ENCODE measurements at regions of chr17 and their contacts with region 1.

Region 1: DNA sequence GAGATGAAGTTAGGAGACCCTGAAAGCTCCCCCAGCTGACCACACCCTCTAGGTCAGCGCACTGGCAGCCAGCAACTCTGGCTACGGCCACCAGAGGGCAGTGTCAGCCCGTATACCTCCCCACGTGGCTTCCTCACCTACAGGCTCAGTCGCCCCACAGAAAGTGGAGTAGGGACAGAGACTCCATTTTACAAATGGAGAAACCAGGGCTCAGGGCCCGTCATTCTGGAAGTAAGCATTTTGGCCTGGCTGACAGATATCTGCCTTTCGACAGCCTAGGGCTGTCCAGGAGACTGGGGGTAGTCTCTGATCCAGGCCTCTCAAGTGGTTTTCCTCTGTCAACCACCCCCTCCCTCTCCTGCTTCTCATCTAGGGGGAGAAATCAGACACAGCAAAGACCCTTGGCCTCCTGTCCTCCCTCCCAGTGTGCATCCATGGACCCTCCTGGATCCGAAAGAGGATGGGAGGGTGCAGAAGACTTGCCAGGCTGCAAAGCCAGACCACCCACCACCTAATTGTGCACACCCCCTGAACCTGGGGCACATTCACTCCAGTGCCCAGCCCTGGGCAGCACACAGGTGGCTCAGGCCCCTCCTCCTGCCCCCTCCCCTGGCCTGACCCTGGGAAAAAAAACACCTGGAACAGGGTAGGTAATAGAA is 3.8 kb upstream of the HAP1 start:
- DNase-seq: peak; percentile 75 to 82 (median 80)
- ATAC-seq: peak; percentile 92 to 96 (median 94)
- H3K4me3 ChIP-seq: no peak overlapping the region
- H3K27ac ChIP-seq: no peak overlapping the region
- H3K4me1 ChIP-seq: peaks cover 0 to 13% (median 3%) of the 10 kb centered on the region in 4 donors
- H3K27me3 ChIP-seq: peaks cover 5 to 12% of the 10 kb centered on the region in 2 donors
- CTCF ChIP-seq: peak; percentile 98 to 100 (median 98)
- POLR2A ChIP-seq: no peak

Region 2: GRCh38 chr17:41801374-41802271 is 63.4 kb after region 1 on chr17:
- intact Hi-C with region 1: loop called (anchors 5 kb)
- DNase-seq: peak; percentile 77 to 82 (median 81)
- ATAC-seq: peak; percentile 89 to 97 (median 94)
- H3K4me3 ChIP-seq: no peak overlapping the region
- H3K27ac ChIP-seq: no peak overlapping the region
- H3K4me1 ChIP-seq: peaks cover 0 to 6% (median 3%) of the 10 kb centered on the region in 4 donors
- H3K27me3 ChIP-seq: no peaks in the 10 kb centered on the region
- CTCF ChIP-seq: peak; percentile 93 to 98 (median 96)
- POLR2A ChIP-seq: no peak

Region 3: GRCh38 chr17:41885733-41886132 is 147.5 kb after region 1 on chr17:
- intact Hi-C with region 1: loop called in 1 of 2 experiments (anchors 10 kb)
- DNase-seq: no peak
- ATAC-seq: peak; percentile 34 to 69 (median 49)
- H3K4me3 ChIP-seq: no peak overlapping the region
- H3K27ac ChIP-seq: no peak overlapping the region
- H3K4me1 ChIP-seq: no peaks in the 10 kb centered on the region
- H3K27me3 ChIP-seq: no peaks in the 10 kb centered on the region
- CTCF ChIP-seq: peak in 3 of 4 donors; percentile 28 to 52 (median 46)
- POLR2A ChIP-seq: no peak

Measured in right lobe of liver (tissue), 6 donors.